GM10248 (cell line): ENCODE measurements at regions of chr10 and their contacts with region 1.

Region 1: DNA sequence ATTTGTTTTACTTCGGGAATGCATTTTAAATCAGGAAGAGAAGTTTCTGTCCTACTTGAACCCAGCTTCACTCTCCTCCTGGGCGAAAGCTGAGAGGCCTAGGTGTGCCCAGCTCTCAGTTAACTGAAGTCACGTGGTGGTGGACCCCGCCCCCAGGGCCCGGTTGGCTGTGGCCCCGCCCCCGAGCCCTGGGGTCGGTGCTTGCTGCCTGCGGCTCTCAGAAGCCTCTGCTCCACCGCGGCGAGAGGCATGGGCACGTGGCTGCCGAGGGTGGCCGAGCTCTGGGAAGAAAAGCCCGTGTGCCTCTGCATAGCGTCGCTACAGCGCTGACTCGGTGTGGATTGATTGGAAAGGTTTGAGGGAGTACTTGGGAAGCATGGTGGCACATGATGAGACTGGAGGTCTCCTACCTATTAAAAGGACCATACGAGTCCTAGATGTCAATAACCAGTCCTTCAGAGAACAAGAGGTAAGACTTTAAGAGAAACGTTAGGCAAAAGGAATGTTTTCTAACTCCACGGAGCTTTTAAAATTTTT is 34.1 kb downstream of the NET1 start:
- DNase-seq: peak; percentile 58
- CTCF ChIP-seq: no peak

Region 2: GRCh38 chr10:5563991-5564536 is 117.6 kb after region 1 on chr10:
- CTCF ChIA-PET with region 1: no interaction called
- POLR2A ChIA-PET with region 1: no interaction called
- DNase-seq: no peak
- CTCF ChIP-seq: no peak

Region 3: DNA sequence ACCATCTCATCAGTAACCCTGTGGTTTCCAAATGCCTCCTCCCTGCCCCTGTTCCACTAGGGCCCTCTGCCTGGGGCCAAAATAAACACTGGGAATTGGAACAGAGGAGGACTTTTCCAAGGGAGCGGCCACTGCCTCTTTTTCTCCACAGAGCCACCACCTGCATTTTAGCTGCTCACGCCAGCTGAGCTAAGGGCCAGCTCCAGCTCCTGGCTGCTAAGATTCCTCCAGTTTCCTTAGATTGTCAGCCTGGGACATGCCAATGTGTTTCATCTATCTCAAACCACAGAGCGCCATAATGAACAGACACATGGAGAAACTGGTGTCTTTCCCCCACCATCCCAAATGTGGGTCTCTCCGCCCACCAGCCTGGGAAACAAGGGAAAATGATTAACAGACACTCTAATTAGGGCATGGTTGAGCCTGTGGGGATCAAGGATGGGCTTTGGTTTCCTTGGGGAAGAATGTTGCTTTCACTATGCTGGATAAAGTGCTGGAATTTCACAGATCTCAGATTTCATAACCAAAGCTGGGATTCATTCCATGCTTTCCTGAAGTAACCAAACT is 167.8 kb after region 1 on chr10:
- CTCF ChIA-PET with region 1: interaction called, 12 read pairs
- POLR2A ChIA-PET with region 1: no interaction called
- DNase-seq: no peak
- CTCF ChIP-seq: no peak